ENCODE measurements at regions of chr15 and their contacts with region 1.

Region 1: GRCh38 chr15:85689729-85690128 is 105.0 kb downstream of the KLHL25 start:
- H3K4me3 Mint-ChIP-seq: peak overlapping the region; percentile 98
- H3K27ac Mint-ChIP-seq: peak overlapping the region; percentile 97
- H3K4me1 Mint-ChIP-seq: peaks cover 50% of the 10 kb centered on the region
- H3K27me3 Mint-ChIP-seq: no peaks in the 10 kb centered on the region

Region 2: GRCh38 chr15:85485956-85486567 is 203.7 kb before region 1 on chr15:
- intact Hi-C with region 1: loop called (anchors 10 kb)
- H3K4me3 Mint-ChIP-seq: no peak overlapping the region
- H3K27ac Mint-ChIP-seq: no peak overlapping the region
- H3K4me1 Mint-ChIP-seq: peaks cover 37% of the 10 kb centered on the region
- H3K27me3 Mint-ChIP-seq: no peaks in the 10 kb centered on the region

Region 3: GRCh38 chr15:85618956-85619491 is 70.7 kb before region 1 on chr15:
- intact Hi-C with region 1: loop called (anchors 5 kb)
- H3K4me3 Mint-ChIP-seq: no peak overlapping the region
- H3K27ac Mint-ChIP-seq: no peak overlapping the region
- H3K4me1 Mint-ChIP-seq: peaks cover 24% of the 10 kb centered on the region
- H3K27me3 Mint-ChIP-seq: no peaks in the 10 kb centered on the region

Region 4: GRCh38 chr15:85704720-85705429 is 15.1 kb after region 1 on chr15:
- intact Hi-C with region 1: loop called (anchors 2 kb)
- H3K4me3 Mint-ChIP-seq: no peak overlapping the region
- H3K27ac Mint-ChIP-seq: peak overlapping the region; percentile 65
- H3K4me1 Mint-ChIP-seq: peaks cover 39% of the 10 kb centered on the region
- H3K27me3 Mint-ChIP-seq: no peaks in the 10 kb centered on the region

Measured in dendritic cell treated with granulocyte-macrophage colony-stimulating factor and Interleukin-4, amounts not matched to agents 40 ng/mL and 50 ng/mL, for 4 days (primary cell).